ENCODE measurements at regions of chr17 and their contacts with region 1.

Region 1: GRCh38 chr17:20944014-20944865 is 98.6 kb downstream of the USP22 start:
- DNase-seq: peak; percentile 37
- ATAC-seq: peak; percentile 97
- H3K4me3 ChIP-seq: no peak overlapping the region
- H3K27ac ChIP-seq: no peak overlapping the region
- H3K4me1 ChIP-seq: no peaks in the 10 kb centered on the region
- H3K27me3 ChIP-seq: no peaks in the 10 kb centered on the region; a peak in 1 of 5 replicates
- CTCF ChIP-seq: peak; percentile 75
- EP300 ChIP-seq: no peak
- POLR2A ChIP-seq: no peak
- RAD21 ChIP-seq: 0 out of 2 replicates have a peak, but pooled peaks have one; percentile 48

Region 2: DNA sequence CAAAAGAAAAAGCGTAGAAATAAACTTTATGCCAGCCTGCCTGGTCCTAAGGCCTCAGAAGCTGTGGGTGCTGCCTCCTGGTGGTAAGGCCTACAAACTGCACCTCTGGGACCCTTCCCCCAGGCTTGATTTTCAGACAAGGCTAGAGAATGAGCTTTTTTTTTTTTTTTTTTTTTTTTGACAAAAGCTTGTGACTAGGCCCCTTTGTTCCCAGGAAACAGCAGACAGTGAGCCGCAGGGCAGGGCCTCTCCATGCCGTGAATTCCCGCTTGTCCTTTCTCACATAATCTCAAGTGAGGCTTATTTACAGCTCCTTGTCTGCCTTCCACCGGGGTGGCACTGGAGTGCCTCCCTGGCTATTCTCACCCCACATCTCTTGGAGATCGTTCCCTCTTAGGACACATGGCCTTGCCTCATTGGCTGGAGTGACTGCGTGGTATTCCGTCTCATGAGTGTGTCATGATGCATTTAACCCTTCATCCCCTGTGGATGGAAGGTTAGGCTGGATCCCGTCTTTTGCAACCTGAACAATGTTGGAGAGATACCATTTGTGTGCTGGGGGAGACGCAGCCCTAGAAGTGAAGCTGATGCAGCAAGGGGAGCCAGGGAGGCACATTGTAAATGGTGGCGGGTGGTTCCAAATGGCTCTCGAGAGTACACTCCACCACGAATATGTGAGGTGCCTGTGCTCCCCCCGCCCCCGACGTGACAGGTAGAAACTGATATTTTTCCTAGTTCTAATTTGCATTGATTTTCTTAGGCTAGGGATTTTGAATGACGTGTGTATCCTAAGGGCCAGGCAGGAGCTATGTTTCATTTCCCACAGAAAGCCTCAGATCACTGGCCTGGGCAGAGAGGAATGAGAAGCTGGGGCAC is 49.0 kb after region 1 on chr17:
- CTCF ChIA-PET with region 1: interaction called, 11 read pairs
- POLR2A ChIA-PET with region 1: no interaction called
- in situ Hi-C with region 1: no loop called
- intact Hi-C with region 1: loop called (anchors 1 kb)
- DNase-seq: peak; percentile 58
- ATAC-seq: peak; percentile 21
- H3K4me3 ChIP-seq: no peak overlapping the region; a peak in 1 of 6 replicates
- H3K27ac ChIP-seq: peak overlapping the region; percentile 48
- H3K4me1 ChIP-seq: peaks cover 33% of the 10 kb centered on the region
- H3K27me3 ChIP-seq: no peaks in the 10 kb centered on the region
- CTCF ChIP-seq: peak; percentile 73
- EP300 ChIP-seq: no peak
- POLR2A ChIP-seq: no peak
- RAD21 ChIP-seq: peak; percentile 53; the same call in 1 of the 2 replicates